ENCODE measurements at regions of chr9 and their contacts with region 1.

Region 1: GRCh38 chr9:82466616-82467260 is 478.2 kb downstream of the SPATA31D1 start:
- DNase-seq: peak; percentile 81
- ATAC-seq: peak; percentile 100
- H3K4me3 Mint-ChIP-seq: no peak overlapping the region
- H3K27ac Mint-ChIP-seq: no peak overlapping the region
- H3K4me1 Mint-ChIP-seq: no peaks in the 10 kb centered on the region; the same call in 1 of the 2 replicates
- H3K27me3 Mint-ChIP-seq: no peaks in the 10 kb centered on the region
- CTCF ChIP-seq: peak; percentile 44

Region 2: DNA sequence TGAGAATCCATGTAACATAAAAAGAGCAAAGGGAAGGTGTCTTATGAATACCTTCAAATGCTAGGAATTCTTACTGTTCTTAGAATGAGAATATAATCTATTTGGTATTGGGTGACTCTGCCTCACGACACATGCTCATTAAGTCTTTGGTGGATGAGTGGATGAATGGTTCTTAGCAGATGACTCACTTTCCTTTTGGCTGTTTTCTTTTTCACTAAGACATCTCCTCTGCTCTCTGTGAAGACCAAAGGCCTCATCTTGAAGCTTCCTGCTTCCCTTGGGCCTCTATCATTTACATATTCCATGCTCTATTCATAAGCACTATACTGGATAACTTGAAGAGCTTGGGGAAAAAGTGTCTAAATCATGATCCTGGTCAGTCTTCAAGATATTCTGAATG is 10.1 kb before region 1 on chr9:
- CTCF ChIA-PET with region 1: interaction called, 11 read pairs
- POLR2A ChIA-PET with region 1: no interaction called
- DNase-seq: no peak
- ATAC-seq: no peak
- H3K4me3 Mint-ChIP-seq: no peak overlapping the region
- H3K27ac Mint-ChIP-seq: no peak overlapping the region
- H3K4me1 Mint-ChIP-seq: peaks cover 14% of the 10 kb centered on the region
- H3K27me3 Mint-ChIP-seq: no peaks in the 10 kb centered on the region
- CTCF ChIP-seq: no peak

Region 3: DNA sequence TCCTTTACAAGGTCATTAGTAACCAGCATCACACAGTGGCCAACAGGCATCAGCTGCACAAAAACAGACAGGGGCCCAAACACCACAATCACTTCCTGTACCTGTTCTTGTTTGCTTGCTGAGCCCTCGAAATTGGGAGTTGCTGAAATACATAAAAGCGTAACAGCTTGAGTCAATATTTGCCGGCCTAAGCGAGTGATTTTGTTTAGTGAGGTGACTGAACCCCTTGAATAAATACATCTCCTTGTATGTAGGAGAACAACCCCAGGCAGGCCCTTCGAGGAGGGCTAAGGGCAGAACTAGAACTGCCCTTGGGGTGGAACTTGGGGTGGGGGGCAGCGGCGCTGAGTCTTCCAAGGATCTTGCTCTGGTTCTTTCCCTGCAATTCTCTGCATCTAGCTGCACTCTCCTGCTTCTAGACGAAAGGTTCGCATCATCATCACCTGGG is 93.7 kb after region 1 on chr9:
- CTCF ChIA-PET with region 1: no interaction called
- POLR2A ChIA-PET with region 1: no interaction called
- DNase-seq: no peak
- ATAC-seq: no peak
- H3K4me3 Mint-ChIP-seq: no peak overlapping the region
- H3K27ac Mint-ChIP-seq: no peak overlapping the region
- H3K4me1 Mint-ChIP-seq: peaks cover 14% of the 10 kb centered on the region
- H3K27me3 Mint-ChIP-seq: no peaks in the 10 kb centered on the region; the same call in 1 of the 2 replicates
- CTCF ChIP-seq: no peak

Measured in WTC11 (cell line).